HepG2 (cell line): ENCODE measurements at regions of chr7 and their contacts with region 1.

Region 1: DNA sequence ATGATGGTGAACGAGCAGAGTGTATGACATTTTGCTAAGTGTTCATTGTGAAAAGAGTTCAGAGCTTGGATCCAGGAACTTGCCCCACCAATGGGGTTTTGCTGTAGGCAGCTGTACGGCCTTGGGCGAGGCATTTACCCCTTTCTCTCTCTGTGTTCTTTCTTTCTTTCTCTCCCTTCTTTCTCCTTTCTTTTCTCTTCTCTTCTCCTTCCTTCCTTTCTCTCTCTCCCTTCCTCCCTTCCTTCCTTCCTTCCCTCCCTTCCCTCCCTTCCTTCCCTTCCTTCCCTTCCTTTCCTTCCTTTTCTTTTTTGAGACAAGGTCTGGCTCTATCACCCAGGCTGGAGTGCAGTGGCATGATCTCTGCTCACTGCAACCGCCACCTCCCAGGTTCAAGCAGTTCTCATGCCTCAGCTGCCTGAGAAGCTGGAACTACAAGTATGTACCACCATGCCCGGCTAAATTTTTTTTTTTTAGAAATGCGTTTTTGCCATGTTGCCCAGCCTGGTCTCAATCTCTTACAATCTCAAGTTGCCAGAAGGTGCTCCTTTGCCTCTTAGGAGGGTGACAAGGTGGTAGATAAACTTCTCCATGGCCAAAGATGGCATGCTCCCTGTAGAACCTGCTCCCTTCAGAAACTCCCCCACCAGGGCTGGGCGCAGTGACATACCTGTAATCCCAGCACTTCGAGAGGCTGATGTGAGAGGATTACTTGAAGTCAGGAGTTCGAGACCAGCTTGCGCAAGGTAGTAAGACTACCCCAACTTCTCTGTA is 45.5 kb upstream of the KMT2C start:
- DNase-seq: no peak
- ATAC-seq: no peak
- H3K4me3 ChIP-seq: no peak overlapping the region
- H3K27ac ChIP-seq: no peak overlapping the region
- H3K4me1 ChIP-seq: no peaks in the 10 kb centered on the region
- H3K27me3 ChIP-seq: no peaks in the 10 kb centered on the region
- CTCF ChIP-seq: no peak
- EP300 ChIP-seq: no peak
- POLR2A ChIP-seq: no peak
- RAD21 ChIP-seq: no peak

Region 2: GRCh38 chr7:152471023-152471782 is 10.1 kb before region 1 on chr7:
- CTCF ChIA-PET with region 1: no interaction called
- POLR2A ChIA-PET with region 1: no interaction called
- in situ Hi-C with region 1: no loop called
- intact Hi-C with region 1: loop called (anchors 1 kb)
- DNase-seq: no peak
- ATAC-seq: no peak
- H3K4me3 ChIP-seq: no peak overlapping the region
- H3K27ac ChIP-seq: no peak overlapping the region
- H3K4me1 ChIP-seq: peaks cover 16% of the 10 kb centered on the region
- H3K27me3 ChIP-seq: no peaks in the 10 kb centered on the region
- CTCF ChIP-seq: no peak
- EP300 ChIP-seq: no peak
- POLR2A ChIP-seq: no peak
- RAD21 ChIP-seq: no peak

Region 3: DNA sequence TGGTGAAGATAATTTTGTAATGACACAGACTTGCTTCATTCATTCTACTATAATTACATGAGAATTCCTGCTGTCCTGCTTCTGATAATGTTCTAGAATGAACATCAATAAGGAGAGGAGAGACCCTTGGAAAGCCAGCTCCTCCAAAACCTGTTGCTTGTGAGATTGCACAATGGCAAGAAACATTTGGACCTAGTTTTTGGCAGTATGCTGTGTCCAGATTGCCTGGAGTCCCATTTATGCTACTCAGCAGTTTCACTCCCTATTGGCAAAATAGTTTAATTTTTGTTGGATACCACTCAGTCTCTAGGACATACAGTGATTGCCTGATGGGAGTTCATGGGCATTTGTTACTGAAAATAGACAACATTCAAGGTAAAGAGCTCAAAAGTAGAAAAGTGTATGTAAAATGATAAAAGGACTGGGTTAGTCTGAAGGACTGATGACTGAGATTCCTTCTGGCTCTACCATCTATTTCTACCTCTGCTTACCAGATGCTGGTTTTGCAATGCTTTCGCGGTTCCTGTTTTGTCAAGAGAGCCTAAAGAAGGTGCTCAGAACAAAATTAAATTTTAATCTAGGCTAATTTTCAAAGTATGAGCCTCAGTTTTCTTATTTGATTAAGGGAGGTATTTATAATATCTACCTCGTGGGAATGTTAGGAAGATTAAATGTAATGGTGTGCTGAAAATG is 270.3 kb after region 1 on chr7:
- CTCF ChIA-PET with region 1: no interaction called
- POLR2A ChIA-PET with region 1: no interaction called
- in situ Hi-C with region 1: no loop called
- intact Hi-C with region 1: no loop called
- DNase-seq: no peak
- ATAC-seq: no peak
- H3K4me3 ChIP-seq: no peak overlapping the region
- H3K27ac ChIP-seq: no peak overlapping the region
- H3K4me1 ChIP-seq: no peaks in the 10 kb centered on the region
- H3K27me3 ChIP-seq: no peaks in the 10 kb centered on the region
- CTCF ChIP-seq: no peak
- EP300 ChIP-seq: no peak
- POLR2A ChIP-seq: no peak
- RAD21 ChIP-seq: no peak